ENCODE measurements at regions of chr6 and their contacts with region 1.

Region 1: GRCh38 chr6:27592481-27593199 is 119.7 kb upstream of the ZNF184 start:
- DNase-seq: peak; percentile 71
- H3K4me3 Mint-ChIP-seq: no peak overlapping the region
- H3K27ac Mint-ChIP-seq: no peak overlapping the region
- H3K4me1 Mint-ChIP-seq: no peaks in the 10 kb centered on the region
- H3K27me3 Mint-ChIP-seq: peaks cover 25% of the 10 kb centered on the region

Region 2: GRCh38 chr6:27400877-27401642 is 191.6 kb before region 1 on chr6:
- CTCF ChIA-PET with region 1: no interaction called
- POLR2A ChIA-PET with region 1: no interaction called
- intact Hi-C with region 1: no loop called
- DNase-seq: no peak
- H3K4me3 Mint-ChIP-seq: no peak overlapping the region
- H3K27ac Mint-ChIP-seq: no peak overlapping the region
- H3K4me1 Mint-ChIP-seq: no peaks in the 10 kb centered on the region
- H3K27me3 Mint-ChIP-seq: no peaks in the 10 kb centered on the region

Region 3: DNA sequence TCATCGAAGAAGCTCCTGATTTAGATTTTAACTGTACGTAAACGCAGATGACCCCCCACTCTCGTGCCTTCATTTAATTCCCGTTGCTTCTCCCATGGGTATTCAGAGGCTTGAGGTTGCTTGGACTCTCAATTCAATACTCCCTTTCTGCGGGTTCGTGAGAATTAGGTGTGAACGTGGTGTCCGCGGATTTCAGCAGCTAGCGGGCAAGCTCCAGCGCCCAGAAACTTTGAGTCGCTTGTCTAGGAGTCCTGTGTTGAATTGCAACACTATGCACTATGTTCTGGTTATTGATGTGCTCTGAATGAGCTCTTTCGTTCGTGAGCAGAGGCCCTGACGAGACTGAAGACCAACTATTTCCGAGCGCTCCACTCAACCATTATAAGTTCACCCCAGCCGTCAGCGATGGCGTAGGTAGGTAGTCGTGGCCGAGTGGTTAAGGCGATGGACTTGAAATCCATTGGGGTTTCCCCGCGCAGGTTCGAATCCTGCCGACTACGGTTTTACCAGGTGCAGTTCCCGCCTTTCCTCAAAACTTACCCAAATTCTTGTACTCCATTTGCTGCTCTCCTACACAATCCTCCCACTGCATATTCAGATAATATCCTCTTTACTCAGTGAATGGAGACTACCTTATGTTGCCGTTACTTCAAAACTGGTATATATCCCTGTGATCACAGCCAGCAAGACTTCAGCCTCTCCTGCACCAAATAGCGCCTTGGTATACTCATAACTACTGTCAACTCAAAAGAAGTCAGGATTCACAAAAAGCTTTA is 47.2 kb before region 1 on chr6:
- CTCF ChIA-PET with region 1: no interaction called
- POLR2A ChIA-PET with region 1: no interaction called
- intact Hi-C with region 1: loop called (anchors 5 kb)
- DNase-seq: peak; percentile 70
- H3K4me3 Mint-ChIP-seq: peak overlapping the region; percentile 57
- H3K27ac Mint-ChIP-seq: no peak overlapping the region
- H3K4me1 Mint-ChIP-seq: peaks cover 14% of the 10 kb centered on the region
- H3K27me3 Mint-ChIP-seq: peaks cover 83% of the 10 kb centered on the region

Region 4: GRCh38 chr6:27759930-27760329 is 167.3 kb after region 1 on chr6:
- CTCF ChIA-PET with region 1: no interaction called
- POLR2A ChIA-PET with region 1: no interaction called
- intact Hi-C with region 1: no loop called
- DNase-seq: no peak
- H3K4me3 Mint-ChIP-seq: no peak overlapping the region
- H3K27ac Mint-ChIP-seq: no peak overlapping the region
- H3K4me1 Mint-ChIP-seq: peaks cover 29% of the 10 kb centered on the region
- H3K27me3 Mint-ChIP-seq: no peaks in the 10 kb centered on the region

Measured in activated CD4-positive, alpha-beta memory T cell treated with anti-CD3 and anti-CD28 coated beads for 36 hours (primary cell).